Activated CD4-positive, alpha-beta memory T cell treated with anti-CD3 and anti-CD28 coated beads, Interleukin-2, amount 10 ng/mL, durations not matched to agents 7 days and 5 days (primary cell): ENCODE measurements at regions of chr5 and their contacts with region 1.

Region 1: GRCh38 chr5:157994906-157995519 is 136.1 kb upstream of the CLINT1 start:
- DNase-seq: peak; percentile 58
- H3K4me3 Mint-ChIP-seq: peak overlapping the region; percentile 49
- H3K27ac Mint-ChIP-seq: no peak overlapping the region
- H3K4me1 Mint-ChIP-seq: peaks cover 20% of the 10 kb centered on the region
- H3K27me3 Mint-ChIP-seq: peaks cover 44% of the 10 kb centered on the region

Region 2: DNA sequence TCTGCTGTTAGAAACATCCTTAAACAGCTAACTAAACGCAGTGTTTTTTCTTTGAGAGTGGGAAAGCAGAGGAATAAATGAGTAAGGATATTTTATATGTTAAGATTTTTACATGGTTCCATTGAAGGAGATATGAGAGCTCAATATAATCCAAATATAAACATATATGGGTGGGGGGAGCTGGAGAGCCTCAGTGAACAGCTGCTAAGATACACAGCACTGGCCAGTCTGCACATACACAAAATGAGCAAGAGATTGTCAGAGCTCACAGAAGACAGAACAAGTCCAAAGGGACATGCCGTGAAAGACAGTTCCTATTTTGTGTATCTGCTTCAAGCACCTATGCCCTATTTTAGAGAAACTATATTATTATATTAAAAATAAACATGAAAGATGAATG is 182.9 kb before region 1 on chr5:
- CTCF ChIA-PET with region 1: interaction called, 16 read pairs
- POLR2A ChIA-PET with region 1: no interaction called
- DNase-seq: no peak
- H3K4me3 Mint-ChIP-seq: no peak overlapping the region
- H3K27ac Mint-ChIP-seq: no peak overlapping the region
- H3K4me1 Mint-ChIP-seq: no peaks in the 10 kb centered on the region
- H3K27me3 Mint-ChIP-seq: no peaks in the 10 kb centered on the region

Region 3: DNA sequence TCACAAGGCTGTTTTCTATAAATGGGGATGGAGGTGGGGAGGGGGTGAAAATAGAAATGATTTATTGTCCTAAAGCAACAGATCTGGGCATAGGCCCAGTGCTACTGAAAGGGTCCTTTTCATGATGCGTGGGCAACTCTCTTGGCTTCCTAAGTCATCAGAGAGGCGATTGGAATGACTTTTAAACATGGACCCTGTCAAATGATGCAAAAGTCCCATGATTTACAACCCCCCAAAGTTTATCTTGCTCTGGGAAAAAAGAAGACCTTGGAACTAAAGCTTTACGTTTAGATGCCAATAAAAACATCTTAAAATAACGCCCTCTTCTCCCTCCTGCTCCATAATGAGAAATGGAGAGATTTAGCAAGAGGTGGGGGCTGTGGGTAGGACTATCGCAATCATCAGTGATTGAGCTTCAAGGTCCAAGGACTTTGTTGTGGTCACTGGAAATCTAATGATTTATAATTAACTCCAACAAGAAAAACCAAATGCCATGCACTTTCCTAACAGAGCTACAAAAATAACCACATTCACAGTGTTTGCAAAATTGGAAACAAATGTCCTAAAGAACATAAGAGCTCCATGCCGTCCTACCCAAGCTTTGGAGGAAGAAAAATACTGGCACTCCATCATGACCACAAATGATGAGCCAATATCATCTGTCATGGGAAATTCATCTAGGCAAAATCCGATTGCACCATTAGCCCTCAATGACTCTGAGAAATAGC is 31.5 kb after region 1 on chr5:
- CTCF ChIA-PET with region 1: no interaction called
- POLR2A ChIA-PET with region 1: no interaction called
- DNase-seq: no peak
- H3K4me3 Mint-ChIP-seq: no peak overlapping the region
- H3K27ac Mint-ChIP-seq: no peak overlapping the region
- H3K4me1 Mint-ChIP-seq: no peaks in the 10 kb centered on the region
- H3K27me3 Mint-ChIP-seq: peaks cover 34% of the 10 kb centered on the region